CD4-positive, alpha-beta T cell (primary cell): ENCODE measurements at regions of chr7 and their contacts with region 1.

Region 1: GRCh38 chr7:157432957-157433576 is 96.3 kb downstream of the DNAJB6 start:
- DNase-seq: peak; percentile 46 to 78 (median 58)
- ATAC-seq: peak; percentile 84
- H3K4me3 ChIP-seq: peak overlapping the region; percentile 38
- H3K4me3 Mint-ChIP-seq: peak overlapping the region; percentile 9
- H3K27ac ChIP-seq: no peak overlapping the region
- H3K27ac Mint-ChIP-seq: no peak overlapping the region
- H3K4me1 ChIP-seq: peaks cover 11% of the 10 kb centered on the region
- H3K4me1 Mint-ChIP-seq: peaks cover 11% of the 10 kb centered on the region
- H3K27me3 ChIP-seq: no peaks in the 10 kb centered on the region
- H3K27me3 Mint-ChIP-seq: no peaks in the 10 kb centered on the region
- CTCF ChIP-seq: peak; percentile 82

Region 2: DNA sequence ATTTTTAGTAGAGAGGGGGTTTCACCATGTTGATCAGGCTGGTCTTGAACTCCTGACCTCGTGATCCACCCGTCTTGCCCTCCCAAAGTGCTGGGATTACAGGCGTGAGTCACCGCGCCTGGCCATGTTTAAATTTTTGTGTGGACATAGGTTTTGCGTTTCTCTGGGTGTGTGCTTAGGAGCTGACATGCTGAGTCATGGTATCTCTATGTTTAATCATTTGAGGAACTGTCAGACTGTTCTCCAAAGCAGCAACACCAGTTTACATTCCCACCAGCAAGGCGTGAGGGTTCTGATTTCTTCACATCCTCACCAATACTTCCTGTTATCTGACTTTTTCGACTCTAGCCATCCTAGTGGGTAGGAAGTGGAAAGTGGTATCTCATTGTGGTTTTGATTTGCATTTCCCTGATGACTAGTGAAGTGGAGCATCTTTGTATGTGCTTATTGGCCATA is 57.4 kb after region 1 on chr7:
- CTCF ChIA-PET with region 1: no interaction called
- POLR2A ChIA-PET with region 1: interaction called, 4 read pairs
- intact Hi-C with region 1: loop called (anchors 5 to 10 kb)
- DNase-seq: peak in 9 of 14 experiments; percentile 27 to 89 (median 38)
- ATAC-seq: peak; percentile 93
- H3K4me3 ChIP-seq: no peak overlapping the region
- H3K4me3 Mint-ChIP-seq: peak overlapping the region; percentile 17
- H3K27ac ChIP-seq: no peak overlapping the region
- H3K27ac Mint-ChIP-seq: peak overlapping the region; percentile 68
- H3K4me1 ChIP-seq: peaks cover 26% of the 10 kb centered on the region
- H3K4me1 Mint-ChIP-seq: peaks cover 39% of the 10 kb centered on the region
- H3K27me3 ChIP-seq: no peaks in the 10 kb centered on the region
- H3K27me3 Mint-ChIP-seq: no peaks in the 10 kb centered on the region
- CTCF ChIP-seq: no peak

Region 3: GRCh38 chr7:157568770-157569584 is 135.9 kb after region 1 on chr7:
- CTCF ChIA-PET with region 1: no interaction called
- POLR2A ChIA-PET with region 1: no interaction called
- intact Hi-C with region 1: loop called (anchors 5 to 10 kb)
- DNase-seq: peak; percentile 41 to 88 (median 57)
- ATAC-seq: peak; percentile 89
- H3K4me3 ChIP-seq: peak overlapping the region; percentile 62
- H3K4me3 Mint-ChIP-seq: peak overlapping the region; percentile 91
- H3K27ac ChIP-seq: no peak overlapping the region
- H3K27ac Mint-ChIP-seq: peak overlapping the region; percentile 62
- H3K4me1 ChIP-seq: peaks cover 24% of the 10 kb centered on the region
- H3K4me1 Mint-ChIP-seq: peaks cover 23% of the 10 kb centered on the region
- H3K27me3 ChIP-seq: no peaks in the 10 kb centered on the region
- H3K27me3 Mint-ChIP-seq: no peaks in the 10 kb centered on the region
- CTCF ChIP-seq: no peak

Region 4: GRCh38 chr7:157707983-157708918 is 275.2 kb after region 1 on chr7:
- CTCF ChIA-PET with region 1: no interaction called
- POLR2A ChIA-PET with region 1: no interaction called
- intact Hi-C with region 1: loop called in 1 of 2 experiments (anchors 10 kb)
- DNase-seq: peak in 1 of 14 experiments; percentile 16
- ATAC-seq: no peak
- H3K4me3 ChIP-seq: no peak overlapping the region
- H3K4me3 Mint-ChIP-seq: no peak overlapping the region
- H3K27ac ChIP-seq: no peak overlapping the region
- H3K27ac Mint-ChIP-seq: no peak overlapping the region
- H3K4me1 ChIP-seq: no peaks in the 10 kb centered on the region
- H3K4me1 Mint-ChIP-seq: no peaks in the 10 kb centered on the region
- H3K27me3 ChIP-seq: peaks cover 5 to 10% of the 10 kb centered on the region in 2 experiments
- H3K27me3 Mint-ChIP-seq: peaks cover 35% of the 10 kb centered on the region
- CTCF ChIP-seq: no peak